Posterior cingulate gyrus (tissue), 11 donors: ENCODE measurements at regions of chr17 and their contacts with region 1.

Region 1: GRCh38 chr17:21318439-21318838 is 33.9 kb downstream of the MAP2K3 start:
- DNase-seq: peak in 5 of 10 donors; percentile 3 to 78 (median 74)

Region 2: DNA sequence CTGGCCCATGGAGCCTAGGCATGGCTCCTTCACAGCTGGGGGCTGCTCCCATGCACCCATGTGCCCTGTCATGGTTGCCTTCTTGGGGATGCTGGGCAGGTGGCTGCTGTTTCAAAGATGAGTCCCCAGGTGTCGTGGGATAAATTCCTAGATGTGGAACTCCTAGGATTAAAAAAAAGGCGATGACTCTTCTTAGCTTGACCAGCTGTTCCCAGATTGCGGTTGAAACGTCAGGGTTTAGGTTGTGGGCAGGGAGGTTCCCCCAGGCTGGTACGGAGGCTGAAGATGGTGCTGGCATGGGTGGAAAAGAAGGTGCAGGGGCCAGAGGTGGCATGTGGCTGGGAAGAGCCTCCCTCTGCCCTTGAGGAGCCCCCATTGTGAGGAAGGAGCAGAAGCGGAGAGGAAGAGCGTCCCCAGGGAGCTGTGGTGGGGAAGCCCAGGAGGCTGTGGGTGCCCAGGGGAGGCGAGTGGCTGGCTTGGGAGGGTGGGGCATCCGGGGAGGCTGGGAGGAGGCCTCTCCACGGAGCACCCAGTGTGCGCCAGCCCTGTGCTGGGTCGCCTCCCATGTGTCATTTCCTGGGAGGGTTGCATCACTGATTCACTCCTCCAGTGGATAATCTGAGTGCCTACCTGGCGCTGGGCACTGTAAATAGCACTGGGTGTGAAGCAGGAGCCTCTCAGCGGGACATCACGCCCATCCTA is 50.3 kb after region 1 on chr17:
- intact Hi-C with region 1: loop called (anchors 10 kb)
- DNase-seq: no peak